Activated CD4-positive, alpha-beta T cell treated with anti-CD3 and anti-CD28 coated beads, Interleukin-2, amount 10 ng/mL, durations not matched to agents 24 days and 14 days (primary cell): ENCODE measurements at regions of chr11 and their contacts with region 1.

Region 1: DNA sequence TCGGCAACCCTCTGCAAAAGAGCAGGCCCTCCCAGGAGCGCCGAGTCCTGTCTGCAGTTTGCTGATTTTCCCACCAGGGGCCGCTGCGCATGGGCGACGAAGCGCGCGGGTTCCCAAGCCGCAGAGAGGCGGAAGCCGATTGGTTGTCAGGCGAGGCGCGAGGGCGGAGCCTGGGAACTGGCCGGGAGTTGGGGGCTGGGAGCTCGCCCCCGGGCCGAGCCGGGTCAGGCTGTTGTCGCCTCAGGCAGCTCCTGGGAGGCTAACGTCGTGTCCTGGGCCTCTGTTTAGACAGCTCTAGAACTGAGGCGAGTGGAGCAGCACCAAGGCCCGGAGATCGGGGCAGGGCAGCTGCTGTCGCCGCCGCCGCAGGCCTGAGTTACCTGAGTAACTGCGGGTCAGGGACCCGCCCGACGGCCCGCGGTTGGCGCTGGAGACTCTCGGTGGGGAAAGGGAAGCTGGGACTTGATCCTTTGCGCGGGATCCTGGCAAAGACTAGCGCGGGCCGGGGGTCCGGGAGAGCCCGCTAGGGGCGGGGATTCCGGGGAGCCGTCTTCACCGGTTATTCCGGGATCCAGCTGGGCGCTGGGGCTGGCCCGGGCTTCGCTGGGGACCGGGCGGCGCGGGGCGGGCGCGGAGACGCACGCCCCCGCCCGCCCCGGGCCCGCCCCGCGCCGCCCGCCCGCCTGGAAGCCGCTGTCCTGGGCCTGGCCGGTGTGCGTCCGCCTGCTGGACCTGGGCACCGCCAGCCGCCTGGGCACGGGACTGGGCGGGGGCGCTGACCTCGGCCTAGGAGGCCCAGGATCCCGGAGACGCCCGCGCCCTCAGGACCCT is at the start of gene STIM1:
- DNase-seq: peak; percentile 100
- H3K4me3 Mint-ChIP-seq: peak within 1 kb of the TSS; percentile 98
- H3K27ac Mint-ChIP-seq: peak within 1 kb of the TSS; percentile 99
- H3K4me1 Mint-ChIP-seq: peaks cover 56% of the 10 kb centered on the region
- H3K27me3 Mint-ChIP-seq: no peaks in the 10 kb centered on the region
- total RNA-seq, gene STIM1: 60.6 and 63.4 TPM in 2 replicates

Region 2: GRCh38 chr11:3797329-3798095 is 57.7 kb before region 1 on chr11 and contains the start of gene NUP98:
- intact Hi-C with region 1: loop called (anchors 1 kb)
- DNase-seq: peak; percentile 100
- H3K4me3 Mint-ChIP-seq: peak within 1 kb of the TSS; percentile 99
- H3K27ac Mint-ChIP-seq: peak within 1 kb of the TSS; percentile 99
- H3K4me1 Mint-ChIP-seq: peaks cover 35% of the 10 kb centered on the region
- H3K27me3 Mint-ChIP-seq: no peaks in the 10 kb centered on the region
- total RNA-seq, gene NUP98: 122 and 129 TPM in 2 replicates

Region 3: DNA sequence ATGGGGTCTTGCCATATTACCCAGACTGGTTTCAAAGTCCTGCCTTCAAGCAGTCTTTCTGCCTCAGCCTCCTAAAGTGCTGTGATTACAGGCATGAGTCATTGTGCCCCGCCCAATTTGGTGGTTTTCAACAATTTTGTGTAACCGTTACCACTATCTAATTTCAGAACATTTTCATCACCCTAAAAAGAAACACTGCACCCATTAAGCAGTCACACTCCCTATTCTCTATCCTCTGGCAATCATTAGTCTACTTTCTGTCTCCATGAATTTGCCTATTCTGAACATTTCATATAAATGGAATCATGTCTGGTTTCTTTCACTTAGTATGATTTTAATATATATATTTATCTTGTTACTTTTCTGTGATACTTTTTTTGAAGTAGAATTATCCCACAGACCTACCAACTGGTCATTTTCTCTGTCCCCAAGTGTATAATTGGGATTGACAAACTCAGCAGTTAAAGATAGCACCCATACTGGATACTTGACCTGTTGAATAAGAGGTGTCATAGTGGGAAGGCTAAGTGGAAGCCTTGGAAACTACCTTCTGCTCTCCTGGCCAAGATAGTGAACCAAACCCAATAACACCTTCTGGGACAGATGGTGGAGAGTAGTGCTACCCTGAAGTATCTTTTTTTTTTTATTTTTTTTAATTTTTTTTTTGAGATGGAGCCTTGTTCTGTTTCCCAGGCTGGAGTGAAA is 65.1 kb after region 1 on chr11:
- intact Hi-C with region 1: loop called (anchors 2 kb)
- DNase-seq: peak; percentile 89
- H3K4me3 Mint-ChIP-seq: peak overlapping the region; percentile 22
- H3K27ac Mint-ChIP-seq: peak overlapping the region; percentile 31
- H3K4me1 Mint-ChIP-seq: peaks cover 49% of the 10 kb centered on the region
- H3K27me3 Mint-ChIP-seq: no peaks in the 10 kb centered on the region

Region 4: DNA sequence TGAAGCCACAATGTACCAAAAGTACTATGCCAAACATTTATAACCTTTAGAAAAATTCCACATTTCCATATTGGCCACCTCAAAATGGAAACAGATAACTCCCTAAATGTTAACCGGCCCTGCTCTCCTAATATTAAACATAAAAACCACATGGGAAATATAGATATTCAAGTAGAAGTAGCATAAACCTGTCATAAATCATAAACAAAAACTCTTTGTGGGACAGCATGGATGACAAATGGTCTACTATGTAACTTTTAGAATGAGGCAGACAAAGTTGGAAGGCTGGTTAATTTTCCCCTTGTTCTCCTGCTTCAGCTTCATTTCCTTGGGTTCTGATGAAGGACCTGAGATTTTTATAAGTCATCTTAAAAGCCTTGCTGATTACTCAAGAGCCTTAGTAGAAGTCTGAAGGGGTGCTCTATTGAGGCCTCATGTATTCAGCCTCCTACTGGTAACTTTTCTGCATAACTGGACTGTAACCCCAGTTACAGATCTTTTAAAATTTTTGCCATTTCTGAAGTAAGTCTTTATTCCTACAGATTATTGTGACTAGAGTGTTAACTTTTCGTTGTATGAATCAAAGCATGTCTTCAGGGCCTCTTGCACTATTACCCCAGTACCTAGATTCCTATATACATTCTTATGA is 116.7 kb after region 1 on chr11:
- intact Hi-C with region 1: loop called (anchors 5 kb)
- DNase-seq: no peak
- H3K4me3 Mint-ChIP-seq: no peak overlapping the region
- H3K27ac Mint-ChIP-seq: no peak overlapping the region
- H3K4me1 Mint-ChIP-seq: peaks cover 55% of the 10 kb centered on the region
- H3K27me3 Mint-ChIP-seq: no peaks in the 10 kb centered on the region

Region 5: GRCh38 chr11:4025248-4025966 is 170.2 kb after region 1 on chr11:
- intact Hi-C with region 1: no loop called
- DNase-seq: no peak
- H3K4me3 Mint-ChIP-seq: no peak overlapping the region
- H3K27ac Mint-ChIP-seq: no peak overlapping the region
- H3K4me1 Mint-ChIP-seq: peaks cover 2% of the 10 kb centered on the region
- H3K27me3 Mint-ChIP-seq: no peaks in the 10 kb centered on the region

Region 6: DNA sequence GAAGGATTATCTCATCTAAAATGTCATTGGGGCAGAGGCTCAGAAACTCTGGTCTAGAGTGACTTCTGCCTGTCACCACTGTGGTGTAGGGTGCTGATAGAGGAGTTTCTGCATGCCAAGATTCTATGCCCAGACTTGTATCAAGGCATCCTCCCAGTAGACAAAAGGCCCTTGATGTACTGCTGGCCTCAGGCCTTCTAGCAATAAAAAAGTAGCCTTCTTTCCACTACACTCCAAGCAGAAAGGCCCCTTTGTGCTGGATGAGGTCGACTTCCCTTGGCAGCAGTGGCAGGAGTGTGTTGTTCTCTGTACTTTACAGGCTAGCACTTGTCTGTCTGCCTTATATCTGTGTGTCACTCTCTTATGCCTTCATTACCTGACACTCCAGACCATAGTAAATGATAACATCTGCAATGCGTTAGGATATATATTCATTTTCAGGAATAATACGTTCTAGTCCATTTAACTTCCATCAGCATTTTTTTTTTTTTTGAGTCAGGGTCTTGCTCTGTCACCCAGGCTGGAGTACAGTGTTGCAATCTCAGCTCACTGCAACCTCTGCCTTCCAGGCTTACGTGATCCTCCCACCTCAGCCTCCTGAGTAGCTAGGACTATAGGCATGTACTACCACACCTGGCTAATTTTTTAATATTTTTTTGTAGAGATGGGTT is 189.9 kb after region 1 on chr11:
- intact Hi-C with region 1: no loop called
- DNase-seq: no peak
- H3K4me3 Mint-ChIP-seq: no peak overlapping the region
- H3K27ac Mint-ChIP-seq: no peak overlapping the region
- H3K4me1 Mint-ChIP-seq: peaks cover 19% of the 10 kb centered on the region
- H3K27me3 Mint-ChIP-seq: no peaks in the 10 kb centered on the region

Region 7: DNA sequence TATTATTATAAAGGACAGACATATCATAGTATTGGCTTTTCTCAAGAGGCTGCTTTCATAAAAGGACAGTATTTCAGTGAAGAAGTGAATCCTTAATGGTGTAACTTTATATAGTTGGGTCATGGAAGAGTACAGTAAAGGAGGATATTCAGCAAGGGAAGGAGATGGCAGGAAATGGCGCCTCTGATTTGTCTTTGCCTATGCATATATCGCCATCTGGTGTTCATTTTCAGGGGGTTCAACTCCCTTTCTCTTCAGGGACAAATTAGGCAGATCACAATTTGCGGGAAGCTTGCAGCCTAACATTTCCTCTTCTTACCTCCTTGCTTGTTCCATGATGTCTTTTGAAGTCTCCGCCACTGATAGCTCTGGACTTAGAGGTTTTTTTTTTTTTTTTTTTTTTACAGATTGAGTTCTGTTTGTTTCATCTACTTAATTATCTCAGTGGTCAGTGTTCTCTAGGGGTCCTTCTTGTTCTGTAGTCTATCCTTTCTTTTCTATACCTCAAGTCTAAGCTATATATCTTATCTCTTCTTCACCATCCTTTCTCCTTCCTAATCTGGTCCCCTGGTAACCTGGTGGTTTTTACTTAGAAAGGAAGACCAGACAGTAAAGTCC is 217.6 kb after region 1 on chr11:
- intact Hi-C with region 1: loop called (anchors 1 kb)
- DNase-seq: peak; percentile 88
- H3K4me3 Mint-ChIP-seq: no peak overlapping the region
- H3K27ac Mint-ChIP-seq: peak overlapping the region; percentile 5
- H3K4me1 Mint-ChIP-seq: peaks cover 44% of the 10 kb centered on the region
- H3K27me3 Mint-ChIP-seq: no peaks in the 10 kb centered on the region